Aorta (tissue), 5 donors: ENCODE measurements at regions of chr4 and their contacts with region 1.

Region 1: GRCh38 chr4:38366456-38366855 is 297.5 kb upstream of the KLF3 start:
- DNase-seq: peak in 1 of 2 donors; percentile 78
- ATAC-seq: peak; percentile 83
- H3K4me3 ChIP-seq: no peak overlapping the region
- H3K27ac ChIP-seq: peak overlapping the region in 1 of 2 donors; percentile 75
- H3K4me1 ChIP-seq: peaks cover 5 to 13% of the 10 kb centered on the region in 2 donors
- H3K27me3 ChIP-seq: no peaks in the 10 kb centered on the region

Region 2: DNA sequence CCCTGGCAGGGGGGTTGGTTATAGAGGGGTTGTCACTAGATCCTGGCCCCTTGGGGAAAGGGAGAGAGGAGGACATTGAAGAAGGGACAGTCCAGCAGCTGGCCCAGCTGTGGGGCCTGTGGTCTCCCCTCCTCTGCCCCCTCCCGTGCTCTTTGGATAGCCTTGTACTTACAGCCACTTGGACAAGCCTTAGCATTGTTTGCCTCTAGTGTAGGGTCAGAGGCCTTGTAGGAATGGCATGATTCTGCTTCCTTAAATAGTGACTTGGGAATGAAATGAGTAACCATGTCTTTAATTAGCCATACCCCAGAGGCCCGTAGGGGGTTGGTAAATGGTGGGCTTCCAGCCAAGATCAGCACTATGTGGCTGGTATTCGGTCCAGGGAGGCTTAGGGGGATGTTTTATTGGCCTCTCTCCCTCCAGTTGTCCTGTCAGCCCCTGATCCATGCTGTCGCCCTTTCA is 175.7 kb before region 1 on chr4:
- intact Hi-C with region 1: loop called in 1 of 2 experiments (anchors 5 kb)
- DNase-seq: peak; percentile 84 to 88
- ATAC-seq: peak; percentile 88
- H3K4me3 ChIP-seq: no peak overlapping the region
- H3K27ac ChIP-seq: peak overlapping the region; percentile 81 to 85
- H3K4me1 ChIP-seq: peaks cover 0 to 2% of the 10 kb centered on the region in 2 donors
- H3K27me3 ChIP-seq: no peaks in the 10 kb centered on the region

Region 3: GRCh38 chr4:38387348-38387747 is 20.9 kb after region 1 on chr4:
- intact Hi-C with region 1: loop called in 1 of 2 experiments (anchors 2 kb)
- DNase-seq: peak in 1 of 2 donors; percentile 87
- ATAC-seq: peak; percentile 85
- H3K4me3 ChIP-seq: no peak overlapping the region
- H3K27ac ChIP-seq: peak overlapping the region; percentile 57 to 71
- H3K4me1 ChIP-seq: peaks cover 8 to 13% of the 10 kb centered on the region in 2 donors
- H3K27me3 ChIP-seq: no peaks in the 10 kb centered on the region

Region 4: GRCh38 chr4:38663801-38664705 is 297.6 kb after region 1 on chr4 and contains the start of gene KLF3:
- intact Hi-C with region 1: loop called in 1 of 2 experiments (anchors 2 kb)
- DNase-seq: peak; percentile 97
- ATAC-seq: peak; percentile 92
- H3K4me3 ChIP-seq: peak within 1 kb of the TSS; percentile 94 to 99
- H3K27ac ChIP-seq: peak within 1 kb of the TSS; percentile 96
- H3K4me1 ChIP-seq: peaks cover 0 to 2% of the 10 kb centered on the region in 2 donors
- H3K27me3 ChIP-seq: no peaks in the 10 kb centered on the region
- total RNA-seq, gene KLF3: 45.9 to 66.8 TPM